CD8-positive, alpha-beta T cell (primary cell): ENCODE measurements at regions of chr3 and their contacts with region 1.

Region 1: DNA sequence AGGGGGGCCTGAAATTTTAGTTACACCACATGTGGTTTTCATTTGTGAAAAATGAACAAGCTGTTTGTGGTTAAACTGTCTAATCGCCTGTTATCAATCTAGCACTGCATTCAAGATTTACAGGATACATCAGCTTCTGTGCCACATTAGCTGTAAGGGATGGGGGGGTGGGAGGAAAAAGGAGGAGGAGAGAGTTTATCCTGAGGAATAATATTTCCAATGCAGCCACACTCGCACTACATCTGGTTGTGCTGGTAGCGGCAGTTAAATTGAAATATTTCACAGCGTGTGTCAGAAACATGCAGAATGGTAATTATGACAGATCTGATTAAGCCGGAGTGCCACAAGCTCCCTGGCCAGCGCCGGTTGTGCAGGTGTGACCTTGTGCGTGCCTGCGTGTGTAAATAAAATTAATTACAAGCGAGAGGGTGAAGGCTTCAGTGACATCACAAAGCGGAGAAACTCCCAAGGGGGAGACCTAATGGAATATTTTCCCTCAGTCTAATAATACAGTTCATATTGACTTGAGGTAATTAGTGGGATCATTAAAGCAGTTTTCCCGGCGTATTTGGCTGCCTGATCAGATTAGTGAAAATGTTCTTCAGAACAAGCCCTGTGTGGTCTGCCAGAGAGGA is 55.5 kb downstream of the SATB1 start:
- DNase-seq: no peak
- ATAC-seq: no peak
- H3K4me3 ChIP-seq: no peak overlapping the region
- H3K4me3 Mint-ChIP-seq: peak overlapping the region; percentile 41
- H3K27ac ChIP-seq: no peak overlapping the region
- H3K27ac Mint-ChIP-seq: peak overlapping the region; percentile 90
- H3K4me1 ChIP-seq: peaks cover 69% of the 10 kb centered on the region
- H3K4me1 Mint-ChIP-seq: peaks cover 91% of the 10 kb centered on the region
- H3K27me3 ChIP-seq: no peaks in the 10 kb centered on the region
- H3K27me3 Mint-ChIP-seq: no peaks in the 10 kb centered on the region
- CTCF ChIP-seq: no peak

Region 2: GRCh38 chr3:18351823-18352744 is 17.6 kb before region 1 on chr3:
- CTCF ChIA-PET with region 1: interaction called, 5 read pairs
- POLR2A ChIA-PET with region 1: interaction called, 4 read pairs
- intact Hi-C with region 1: loop called in 1 of 2 experiments (anchors 2 kb)
- DNase-seq: no peak
- ATAC-seq: no peak
- H3K4me3 ChIP-seq: no peak overlapping the region
- H3K4me3 Mint-ChIP-seq: no peak overlapping the region
- H3K27ac ChIP-seq: no peak overlapping the region
- H3K27ac Mint-ChIP-seq: peak overlapping the region; percentile 86
- H3K4me1 ChIP-seq: peaks cover 12% of the 10 kb centered on the region
- H3K4me1 Mint-ChIP-seq: peaks cover 55% of the 10 kb centered on the region
- H3K27me3 ChIP-seq: no peaks in the 10 kb centered on the region
- H3K27me3 Mint-ChIP-seq: no peaks in the 10 kb centered on the region
- CTCF ChIP-seq: no peak